PC-9 (cell line): ENCODE measurements at regions of chr13 and their contacts with region 1.

Region 1: DNA sequence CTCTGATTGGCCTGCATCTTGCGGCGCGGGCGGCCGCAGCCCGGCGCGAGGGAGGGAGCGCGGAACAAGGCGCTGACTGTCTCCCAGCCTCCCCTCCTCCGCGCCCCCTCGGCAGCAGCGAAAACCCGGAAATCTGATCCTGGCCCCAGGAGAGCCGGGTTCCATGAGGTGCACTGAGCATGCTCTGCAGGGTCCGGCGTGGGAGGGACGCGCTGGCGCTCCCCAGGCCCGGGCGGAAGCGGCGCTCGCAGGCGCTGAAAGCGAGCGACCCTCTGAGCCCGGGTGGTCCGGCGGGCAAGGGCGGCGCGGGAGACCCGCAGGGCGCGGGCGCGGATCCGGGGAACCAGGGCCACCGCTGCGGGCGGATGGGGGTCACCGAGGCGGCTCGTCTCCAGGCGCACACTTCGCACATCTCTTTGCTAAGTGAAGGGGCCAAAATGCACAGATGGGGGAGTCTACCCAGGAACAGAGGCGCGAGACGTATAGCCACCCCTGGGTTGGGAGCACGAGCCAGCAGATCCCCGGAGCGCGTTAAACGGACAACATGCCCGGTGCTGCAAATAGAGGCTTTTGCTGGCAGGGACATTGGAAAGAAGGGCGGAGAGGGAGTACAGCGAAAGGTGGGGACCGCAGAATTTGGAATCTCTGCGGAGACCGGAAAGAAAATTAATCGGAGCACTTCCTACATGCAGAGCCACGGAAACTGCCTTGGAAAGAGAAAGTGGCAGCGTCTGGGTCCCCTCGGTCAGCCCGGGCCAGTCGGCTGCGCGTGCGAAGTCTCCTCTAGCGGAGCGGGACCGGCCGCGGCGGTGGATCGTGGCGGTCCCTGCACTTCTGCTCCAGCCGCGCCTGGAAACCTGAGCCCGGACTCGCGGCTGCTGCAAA is 510 bp upstream of the PCDH9 start:
- DNase-seq: peak; percentile 76 to 97
- H3K4me3 ChIP-seq: peak overlapping the region; percentile 96
- H3K27ac ChIP-seq: no peak overlapping the region
- H3K4me1 ChIP-seq: peaks cover 9% of the 10 kb centered on the region; the same call in 1 of the 2 replicates
- H3K27me3 ChIP-seq: no peaks in the 10 kb centered on the region
- CTCF ChIP-seq: no peak

Region 2: DNA sequence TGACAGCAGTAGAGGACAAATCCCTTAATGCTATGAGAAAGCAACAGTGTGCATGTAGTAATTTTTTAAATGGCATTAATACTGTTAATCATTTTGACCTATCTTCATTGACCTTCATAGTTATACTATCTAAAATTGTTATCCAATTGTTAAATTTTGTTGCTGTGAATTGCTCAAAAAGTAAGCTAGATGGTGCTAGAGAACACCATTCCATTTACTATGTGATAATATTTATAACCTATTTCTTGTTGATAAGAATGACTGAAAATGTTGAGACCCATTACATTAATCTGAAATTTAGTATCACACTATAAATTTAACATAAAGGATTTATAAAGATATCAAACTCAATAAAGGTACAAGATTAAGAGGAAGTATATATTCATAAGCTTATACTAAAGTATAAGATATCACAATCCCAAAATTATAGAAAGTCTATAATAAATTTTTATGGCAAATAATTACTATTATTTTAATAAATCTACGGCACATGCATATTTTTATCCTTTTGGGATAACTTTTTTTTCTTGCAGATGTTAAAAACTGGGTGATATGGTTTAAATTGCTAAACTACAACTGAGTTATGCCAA is 1573.8 kb before region 1 on chr13:
- CTCF ChIA-PET with region 1: no interaction called
- POLR2A ChIA-PET with region 1: no interaction called
- intact Hi-C with region 1: loop called (anchors 10 kb)
- DNase-seq: no peak
- H3K4me3 ChIP-seq: no peak overlapping the region
- H3K27ac ChIP-seq: no peak overlapping the region
- H3K4me1 ChIP-seq: no peaks in the 10 kb centered on the region
- H3K27me3 ChIP-seq: no peaks in the 10 kb centered on the region
- CTCF ChIP-seq: peak; percentile 70

Region 3: DNA sequence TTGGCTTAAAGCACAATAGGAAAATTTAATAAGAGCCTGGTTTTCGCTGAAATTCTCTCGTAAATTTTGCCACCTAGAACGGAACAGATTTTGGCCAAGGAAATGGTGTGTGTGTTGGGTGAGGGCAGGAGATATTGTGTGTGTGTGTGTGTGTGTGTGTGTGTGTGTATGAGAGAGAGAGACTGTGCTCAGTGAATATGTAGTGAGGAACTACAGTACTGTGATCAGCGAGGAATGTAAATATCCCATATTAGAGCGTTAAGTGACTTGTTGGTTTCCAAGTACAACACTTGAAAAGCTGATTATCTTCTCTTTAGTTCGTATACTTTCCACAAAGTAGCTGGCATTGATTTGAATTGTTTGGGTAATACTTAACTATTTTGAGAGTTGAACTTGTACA is 739.4 kb before region 1 on chr13:
- CTCF ChIA-PET with region 1: no interaction called
- POLR2A ChIA-PET with region 1: interaction called, 11 read pairs
- intact Hi-C with region 1: no loop called
- DNase-seq: no peak
- H3K4me3 ChIP-seq: no peak overlapping the region
- H3K27ac ChIP-seq: no peak overlapping the region
- H3K4me1 ChIP-seq: no peaks in the 10 kb centered on the region
- H3K27me3 ChIP-seq: no peaks in the 10 kb centered on the region
- CTCF ChIP-seq: no peak

Region 4: GRCh38 chr13:66618702-66619101 is 611.9 kb before region 1 on chr13:
- CTCF ChIA-PET with region 1: no interaction called
- POLR2A ChIA-PET with region 1: no interaction called
- intact Hi-C with region 1: loop called (anchors 5 kb)
- DNase-seq: no peak
- H3K4me3 ChIP-seq: no peak overlapping the region
- H3K27ac ChIP-seq: no peak overlapping the region
- H3K4me1 ChIP-seq: no peaks in the 10 kb centered on the region
- H3K27me3 ChIP-seq: no peaks in the 10 kb centered on the region
- CTCF ChIP-seq: peak; percentile 48

Region 5: DNA sequence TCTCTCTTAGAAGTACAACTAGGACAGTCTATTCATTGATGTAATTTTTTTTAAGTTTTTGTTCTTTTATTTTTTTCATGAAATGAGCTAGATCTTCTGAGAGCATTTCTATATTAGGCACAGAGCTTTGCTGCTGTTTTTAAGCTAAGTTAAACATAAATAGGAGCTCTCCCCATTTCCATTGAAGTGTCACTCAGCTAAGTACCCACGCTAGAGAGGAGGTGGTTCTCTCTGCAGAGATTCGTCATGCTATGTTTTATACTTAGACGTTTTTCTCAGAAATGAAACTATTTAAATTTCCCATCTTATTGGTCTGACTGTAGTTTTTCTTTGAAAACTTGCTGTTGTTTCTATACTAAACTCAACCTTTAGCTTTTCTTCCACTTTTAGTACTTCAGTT is 272.0 kb before region 1 on chr13:
- CTCF ChIA-PET with region 1: no interaction called
- POLR2A ChIA-PET with region 1: no interaction called
- intact Hi-C with region 1: no loop called
- DNase-seq: no peak
- H3K4me3 ChIP-seq: no peak overlapping the region
- H3K27ac ChIP-seq: no peak overlapping the region
- H3K4me1 ChIP-seq: no peaks in the 10 kb centered on the region
- H3K27me3 ChIP-seq: no peaks in the 10 kb centered on the region
- CTCF ChIP-seq: no peak

Region 6: DNA sequence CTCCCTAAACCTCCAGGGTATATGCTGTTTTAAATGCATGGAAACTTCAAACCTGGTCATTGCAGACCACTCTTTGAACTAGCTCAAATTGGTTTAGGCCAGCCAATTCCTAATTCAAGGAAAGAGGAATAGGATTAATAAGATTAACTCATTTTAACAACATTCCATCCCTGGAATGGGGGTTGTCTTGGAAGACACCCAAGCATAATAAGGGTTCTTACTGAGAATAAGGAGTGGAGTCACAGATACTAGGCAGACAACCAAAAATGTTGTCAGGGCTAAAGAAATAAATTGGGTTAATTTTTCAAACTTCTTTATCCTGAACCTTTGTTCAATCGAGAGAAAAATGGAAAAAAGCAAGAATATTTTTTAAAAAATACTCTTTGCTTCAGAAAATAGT is 186.7 kb before region 1 on chr13:
- CTCF ChIA-PET with region 1: no interaction called
- POLR2A ChIA-PET with region 1: no interaction called
- intact Hi-C with region 1: no loop called
- DNase-seq: no peak
- H3K4me3 ChIP-seq: no peak overlapping the region
- H3K27ac ChIP-seq: no peak overlapping the region
- H3K4me1 ChIP-seq: no peaks in the 10 kb centered on the region
- H3K27me3 ChIP-seq: no peaks in the 10 kb centered on the region
- CTCF ChIP-seq: no peak

Region 7: GRCh38 chr13:67308004-67308772 is 77.5 kb after region 1 on chr13:
- CTCF ChIA-PET with region 1: no interaction called
- POLR2A ChIA-PET with region 1: no interaction called
- intact Hi-C with region 1: loop called (anchors 2 kb)
- DNase-seq: peak in 1 of 2 experiments; percentile 75
- H3K4me3 ChIP-seq: no peak overlapping the region; the same call in 1 of the 2 replicates
- H3K27ac ChIP-seq: peak overlapping the region; percentile 81
- H3K4me1 ChIP-seq: peaks cover 17% of the 10 kb centered on the region
- H3K27me3 ChIP-seq: no peaks in the 10 kb centered on the region
- CTCF ChIP-seq: no peak